ENCODE measurements at regions of chr2 and their contacts with region 1.

Region 1: DNA sequence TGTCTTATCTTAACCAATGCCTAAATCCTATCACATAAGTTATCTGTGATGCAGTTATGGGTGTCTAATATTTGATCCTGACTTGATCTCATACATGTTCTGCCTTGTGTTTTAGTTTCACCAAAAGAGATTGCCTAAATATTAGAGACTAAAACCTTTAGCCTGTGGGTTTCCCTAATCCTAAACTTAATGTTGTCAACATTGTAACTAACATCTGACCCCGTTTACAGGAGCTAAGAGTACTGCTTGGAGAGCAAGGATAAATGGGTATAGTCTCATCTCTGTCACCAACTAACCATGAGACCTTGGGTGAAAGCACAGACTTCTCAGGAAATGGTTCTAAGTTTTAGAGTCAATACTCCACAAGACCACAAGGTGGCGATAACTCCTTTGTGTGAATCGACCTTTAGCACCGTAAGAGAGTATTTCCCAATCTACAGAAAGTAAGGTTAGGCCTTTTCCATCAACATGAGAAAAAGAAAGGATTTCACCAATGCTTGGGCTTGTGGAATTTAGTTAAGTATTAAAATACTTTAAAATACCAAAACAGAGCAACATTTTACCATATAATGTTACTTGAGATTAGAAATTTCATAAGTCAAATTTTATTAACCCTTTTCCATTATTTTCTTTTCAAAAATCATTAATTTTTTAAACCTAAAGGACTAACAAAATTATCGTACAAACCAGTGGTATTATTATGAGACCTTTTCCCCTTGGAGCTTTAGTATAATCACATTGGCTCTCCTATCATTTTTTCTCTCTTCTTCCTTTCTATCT is 60.5 kb downstream of the G6PC2 start:
- DNase-seq: peak in 7 of 14 experiments; percentile 1 to 84 (median 43)
- ATAC-seq: peak; percentile 76
- H3K4me3 ChIP-seq: no peak overlapping the region
- H3K4me3 Mint-ChIP-seq: no peak overlapping the region
- H3K27ac ChIP-seq: no peak overlapping the region
- H3K27ac Mint-ChIP-seq: no peak overlapping the region
- H3K4me1 ChIP-seq: peaks cover 21% of the 10 kb centered on the region
- H3K4me1 Mint-ChIP-seq: peaks cover 28% of the 10 kb centered on the region
- H3K27me3 ChIP-seq: no peaks in the 10 kb centered on the region
- H3K27me3 Mint-ChIP-seq: peaks cover 9% of the 10 kb centered on the region
- CTCF ChIP-seq: peak; percentile 82

Region 2: GRCh38 chr2:168976034-168976654 is 14.5 kb after region 1 on chr2:
- CTCF ChIA-PET with region 1: interaction called, 11 read pairs
- POLR2A ChIA-PET with region 1: interaction called, 4 read pairs
- intact Hi-C with region 1: no loop called
- DNase-seq: no peak
- ATAC-seq: peak; percentile 29
- H3K4me3 ChIP-seq: no peak overlapping the region
- H3K4me3 Mint-ChIP-seq: no peak overlapping the region
- H3K27ac ChIP-seq: no peak overlapping the region
- H3K27ac Mint-ChIP-seq: no peak overlapping the region
- H3K4me1 ChIP-seq: no peaks in the 10 kb centered on the region
- H3K4me1 Mint-ChIP-seq: no peaks in the 10 kb centered on the region
- H3K27me3 ChIP-seq: no peaks in the 10 kb centered on the region
- H3K27me3 Mint-ChIP-seq: no peaks in the 10 kb centered on the region
- CTCF ChIP-seq: no peak

Region 3: GRCh38 chr2:169109502-169110409 is 148.1 kb after region 1 on chr2:
- CTCF ChIA-PET with region 1: no interaction called
- POLR2A ChIA-PET with region 1: no interaction called
- intact Hi-C with region 1: loop called in 1 of 2 experiments (anchors 10 kb)
- DNase-seq: peak; percentile 55 to 86 (median 62)
- ATAC-seq: no peak
- H3K4me3 ChIP-seq: no peak overlapping the region
- H3K4me3 Mint-ChIP-seq: no peak overlapping the region
- H3K27ac ChIP-seq: no peak overlapping the region
- H3K27ac Mint-ChIP-seq: no peak overlapping the region
- H3K4me1 ChIP-seq: peaks cover 48% of the 10 kb centered on the region
- H3K4me1 Mint-ChIP-seq: peaks cover 47% of the 10 kb centered on the region
- H3K27me3 ChIP-seq: no peaks in the 10 kb centered on the region
- H3K27me3 Mint-ChIP-seq: peaks cover 8% of the 10 kb centered on the region
- CTCF ChIP-seq: peak; percentile 96

Region 4: DNA sequence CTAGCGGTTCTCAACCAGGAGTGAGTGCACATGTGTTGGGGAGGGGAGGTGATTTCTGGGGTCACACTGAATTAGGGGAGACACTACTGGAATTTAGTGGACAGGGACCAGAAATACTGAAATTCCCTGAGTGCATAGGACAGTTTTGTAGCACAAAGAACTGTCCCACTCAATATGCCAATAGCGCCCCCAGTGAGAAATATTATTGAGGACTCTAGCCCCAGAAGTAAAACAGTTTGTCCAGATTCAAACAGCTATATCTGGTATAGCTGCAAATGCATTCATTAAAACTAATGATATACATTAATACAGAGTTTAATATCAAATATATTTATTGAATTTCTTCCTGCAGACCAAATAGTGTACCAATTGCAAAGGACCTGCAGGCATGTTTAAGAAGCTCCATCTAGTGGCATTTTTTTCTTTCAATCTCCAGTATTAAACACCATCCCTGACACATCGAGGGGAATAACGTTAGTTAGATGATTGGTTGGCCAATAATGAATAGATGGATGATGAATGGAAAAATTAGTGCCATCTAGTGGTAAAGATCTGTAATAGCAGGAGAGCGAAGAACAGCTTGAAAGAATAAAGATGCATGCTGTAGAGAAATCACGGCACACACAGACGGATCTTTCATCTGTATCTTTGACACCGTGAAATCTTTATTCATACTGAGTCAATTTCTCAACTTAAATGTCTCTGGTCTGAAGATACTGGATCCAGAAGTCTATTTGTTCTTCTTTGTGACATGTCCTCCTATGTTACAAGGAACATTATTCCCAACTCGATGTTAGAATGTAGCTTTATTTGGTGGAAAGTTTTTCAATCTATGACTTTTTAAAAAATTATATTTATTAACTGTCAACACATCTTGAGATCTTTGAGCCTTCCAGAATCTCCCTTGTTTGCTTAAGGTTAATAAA is 170.2 kb after region 1 on chr2:
- CTCF ChIA-PET with region 1: interaction called, 3 read pairs
- POLR2A ChIA-PET with region 1: no interaction called
- intact Hi-C with region 1: loop called (anchors 1 to 2 kb)
- DNase-seq: peak in 3 of 14 experiments; percentile 56 to 82 (median 72)
- ATAC-seq: peak; percentile 79
- H3K4me3 ChIP-seq: no peak overlapping the region
- H3K4me3 Mint-ChIP-seq: no peak overlapping the region
- H3K27ac ChIP-seq: no peak overlapping the region
- H3K27ac Mint-ChIP-seq: no peak overlapping the region
- H3K4me1 ChIP-seq: no peaks in the 10 kb centered on the region
- H3K4me1 Mint-ChIP-seq: no peaks in the 10 kb centered on the region
- H3K27me3 ChIP-seq: no peaks in the 10 kb centered on the region
- H3K27me3 Mint-ChIP-seq: no peaks in the 10 kb centered on the region
- CTCF ChIP-seq: peak; percentile 94

Region 5: GRCh38 chr2:169141713-169142352 is 180.2 kb after region 1 on chr2:
- CTCF ChIA-PET with region 1: interaction called, 4 read pairs
- POLR2A ChIA-PET with region 1: no interaction called
- intact Hi-C with region 1: loop called in 1 of 2 experiments (anchors 1 kb)
- DNase-seq: peak; percentile 19 to 80 (median 46)
- ATAC-seq: peak; percentile 55
- H3K4me3 ChIP-seq: no peak overlapping the region
- H3K4me3 Mint-ChIP-seq: no peak overlapping the region
- H3K27ac ChIP-seq: no peak overlapping the region
- H3K27ac Mint-ChIP-seq: no peak overlapping the region
- H3K4me1 ChIP-seq: peaks cover 6% of the 10 kb centered on the region
- H3K4me1 Mint-ChIP-seq: no peaks in the 10 kb centered on the region
- H3K27me3 ChIP-seq: no peaks in the 10 kb centered on the region
- H3K27me3 Mint-ChIP-seq: no peaks in the 10 kb centered on the region
- CTCF ChIP-seq: peak; percentile 84